ENCODE measurements at regions of chr3 and their contacts with region 1.

Region 1: GRCh38 chr3:73502609-73503583 is 121.8 kb downstream of the PDZRN3 start:
- DNase-seq: peak; percentile 75
- H3K4me3 ChIP-seq: no peak overlapping the region
- H3K27ac ChIP-seq: peak overlapping the region; percentile 15 to 35 (median 32)
- H3K4me1 ChIP-seq: peaks cover 10 to 28% (median 14%) of the 10 kb centered on the region in 4 donors
- H3K27me3 ChIP-seq: no peaks in the 10 kb centered on the region
- CTCF ChIP-seq: peak; percentile 77 to 87 (median 79)
- EP300 ChIP-seq: no peak
- POLR2A ChIP-seq: no peak

Region 2: DNA sequence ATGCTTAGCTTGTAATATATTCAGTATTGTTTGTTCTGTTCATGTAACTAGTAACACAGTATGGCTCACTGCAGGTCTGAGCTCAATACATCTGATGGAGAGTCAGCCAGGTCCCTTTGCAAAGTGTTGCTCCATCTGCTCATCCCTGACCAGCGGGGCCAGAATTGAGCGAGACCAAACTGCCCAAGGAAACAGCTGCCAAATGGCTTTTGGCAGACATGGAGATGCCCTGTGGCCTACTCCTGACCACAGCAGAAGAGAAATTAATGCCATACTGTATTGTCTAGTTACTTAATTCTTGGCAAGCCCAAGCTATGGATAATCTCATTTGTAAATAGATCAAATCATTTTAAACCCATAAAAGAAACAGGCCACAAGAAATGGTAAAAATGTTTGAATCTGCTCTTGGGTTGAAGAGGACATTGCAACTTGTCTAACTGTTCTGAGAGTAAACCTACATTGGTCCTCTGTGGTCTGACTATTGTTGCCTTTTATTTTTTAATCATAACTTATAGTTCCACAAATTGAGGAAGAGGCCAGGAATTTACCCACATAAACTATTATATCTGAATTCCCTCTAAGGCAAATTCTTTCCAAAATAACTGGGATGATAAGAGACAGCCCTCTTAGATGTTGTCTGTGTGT is 231.9 kb before region 1 on chr3:
- in situ Hi-C with region 1: no loop called
- intact Hi-C with region 1: no loop called
- DNase-seq: no peak
- H3K4me3 ChIP-seq: no peak overlapping the region
- H3K27ac ChIP-seq: no peak overlapping the region
- H3K4me1 ChIP-seq: no peaks in the 10 kb centered on the region
- H3K27me3 ChIP-seq: no peaks in the 10 kb centered on the region
- CTCF ChIP-seq: no peak
- EP300 ChIP-seq: no peak
- POLR2A ChIP-seq: no peak

Region 3: GRCh38 chr3:73520865-73521461 is 18.1 kb after region 1 on chr3:
- in situ Hi-C with region 1: no loop called
- intact Hi-C with region 1: no loop called
- DNase-seq: peak; percentile 63
- H3K4me3 ChIP-seq: peak overlapping the region in 2 of 4 donors; percentile 13 to 30
- H3K27ac ChIP-seq: peak overlapping the region; percentile 77 to 86 (median 84)
- H3K4me1 ChIP-seq: peaks cover 20 to 65% (median 45%) of the 10 kb centered on the region in 4 donors
- H3K27me3 ChIP-seq: no peaks in the 10 kb centered on the region
- CTCF ChIP-seq: no peak
- EP300 ChIP-seq: peak; percentile 89
- POLR2A ChIP-seq: no peak

Region 4: DNA sequence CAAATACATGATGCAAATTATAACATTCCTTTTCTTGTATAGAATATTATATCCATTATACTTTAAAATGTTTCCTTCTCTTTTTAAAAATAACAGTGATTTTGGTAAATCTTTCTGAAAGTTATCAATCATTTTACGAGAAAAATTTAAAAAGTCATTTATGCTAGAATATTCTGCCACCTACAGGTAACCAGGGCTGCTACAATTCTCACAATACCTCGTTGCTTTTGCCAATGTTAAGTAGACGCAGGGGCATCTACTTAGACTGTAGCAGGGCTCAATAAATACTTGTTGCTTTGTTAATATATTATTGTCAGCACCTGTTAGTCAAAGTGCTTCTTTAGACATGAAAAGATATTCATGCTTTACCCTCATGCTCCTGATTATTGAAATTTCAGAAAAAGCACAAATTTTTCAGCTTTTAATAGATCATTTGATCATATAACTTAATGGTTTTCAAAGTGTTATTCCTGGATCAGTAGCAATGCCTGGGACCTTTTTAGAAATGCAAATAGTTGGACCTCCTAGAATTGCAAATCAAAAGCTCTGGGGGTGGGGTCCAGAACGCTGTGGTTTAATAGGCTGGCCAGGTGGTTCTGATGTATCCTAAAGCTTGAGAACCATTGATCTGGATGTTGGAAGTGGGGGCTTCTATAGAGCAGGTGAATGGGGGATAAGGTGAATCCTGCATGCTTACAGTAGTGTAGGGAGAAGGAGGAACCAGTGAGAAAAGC is 345.4 kb after region 1 on chr3:
- in situ Hi-C with region 1: loop called (anchors 10 to 25 kb)
- intact Hi-C with region 1: loop called (anchors 5 kb)
- DNase-seq: no peak
- H3K4me3 ChIP-seq: no peak overlapping the region
- H3K27ac ChIP-seq: no peak overlapping the region
- H3K4me1 ChIP-seq: no peaks in the 10 kb centered on the region
- H3K27me3 ChIP-seq: no peaks in the 10 kb centered on the region
- CTCF ChIP-seq: peak; percentile 61 to 72 (median 63)
- EP300 ChIP-seq: no peak
- POLR2A ChIP-seq: no peak

Region 5: DNA sequence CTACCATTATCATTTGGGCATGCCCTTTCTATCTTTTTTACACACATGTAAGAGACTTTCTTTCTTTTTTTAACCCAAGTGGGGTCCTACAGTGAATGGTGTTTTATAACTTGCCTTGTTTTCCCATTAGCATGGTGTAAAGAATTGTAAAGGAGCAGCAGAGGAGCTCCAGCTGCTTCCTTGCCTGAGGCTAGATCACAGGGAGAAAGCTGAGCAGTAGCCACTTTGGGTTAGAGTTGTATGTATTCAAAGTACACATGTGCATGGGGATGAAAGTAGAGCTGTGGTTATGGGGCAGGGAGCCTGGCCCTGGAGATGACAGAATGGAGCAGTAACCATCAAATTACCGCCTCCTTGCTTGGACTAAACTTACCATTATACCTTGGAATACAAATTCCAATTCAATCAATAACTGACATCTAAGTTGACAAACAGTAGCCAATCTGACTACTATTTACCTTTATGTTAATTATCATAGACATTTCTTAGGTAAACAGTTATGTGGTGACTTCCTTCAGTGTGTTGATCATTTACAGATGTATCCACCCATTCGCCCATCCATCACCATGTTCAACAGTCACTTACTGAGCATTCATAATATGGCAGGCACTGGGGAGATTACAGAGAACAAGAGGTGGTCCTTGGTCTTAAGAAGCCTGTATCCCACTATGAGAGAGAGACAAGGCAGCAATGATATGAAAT is 353.1 kb after region 1 on chr3:
- in situ Hi-C with region 1: loop called in 1 of 4 experiments (anchors 10 kb)
- intact Hi-C with region 1: loop called (anchors 5 kb)
- DNase-seq: no peak
- H3K4me3 ChIP-seq: no peak overlapping the region
- H3K27ac ChIP-seq: no peak overlapping the region
- H3K4me1 ChIP-seq: no peaks in the 10 kb centered on the region
- H3K27me3 ChIP-seq: no peaks in the 10 kb centered on the region
- CTCF ChIP-seq: no peak
- EP300 ChIP-seq: no peak
- POLR2A ChIP-seq: no peak

Measured in transverse colon (tissue), 4 donors.